ENCODE measurements at regions of chr11 and their contacts with region 1.

Region 1: DNA sequence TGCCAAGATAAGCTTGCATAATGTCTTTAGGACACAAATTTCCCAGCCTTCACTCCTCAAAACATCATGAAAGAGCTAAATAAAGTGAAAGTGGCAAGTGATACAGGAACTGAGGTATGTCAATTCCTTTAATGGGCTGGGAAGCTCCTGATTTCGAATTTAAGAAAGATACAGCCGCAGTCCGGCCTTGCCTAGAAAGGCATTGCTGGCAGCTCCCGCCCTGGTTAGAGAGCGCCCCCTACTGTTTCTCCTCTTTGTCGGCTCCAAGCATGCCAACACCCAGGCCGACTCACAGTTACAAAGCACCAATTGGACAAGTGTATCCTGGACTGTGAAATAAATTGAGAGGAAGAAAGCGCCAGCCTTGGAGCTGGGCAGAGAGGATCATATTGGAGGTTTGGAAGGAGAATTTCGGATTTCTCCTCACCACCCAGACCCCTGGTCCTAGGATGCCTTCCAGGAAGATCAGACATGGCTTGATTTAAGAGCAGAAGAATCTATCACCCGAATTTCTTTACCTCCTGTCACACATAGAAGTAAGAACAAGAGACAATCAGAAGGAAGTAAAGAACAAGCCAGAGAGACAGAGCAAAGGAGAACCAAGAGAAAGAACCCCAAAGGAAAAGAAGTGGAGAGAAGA is 84.0 kb downstream of the FAM76B start:
- DNase-seq: peak; percentile 45
- CTCF ChIP-seq: peak; percentile 86

Region 2: DNA sequence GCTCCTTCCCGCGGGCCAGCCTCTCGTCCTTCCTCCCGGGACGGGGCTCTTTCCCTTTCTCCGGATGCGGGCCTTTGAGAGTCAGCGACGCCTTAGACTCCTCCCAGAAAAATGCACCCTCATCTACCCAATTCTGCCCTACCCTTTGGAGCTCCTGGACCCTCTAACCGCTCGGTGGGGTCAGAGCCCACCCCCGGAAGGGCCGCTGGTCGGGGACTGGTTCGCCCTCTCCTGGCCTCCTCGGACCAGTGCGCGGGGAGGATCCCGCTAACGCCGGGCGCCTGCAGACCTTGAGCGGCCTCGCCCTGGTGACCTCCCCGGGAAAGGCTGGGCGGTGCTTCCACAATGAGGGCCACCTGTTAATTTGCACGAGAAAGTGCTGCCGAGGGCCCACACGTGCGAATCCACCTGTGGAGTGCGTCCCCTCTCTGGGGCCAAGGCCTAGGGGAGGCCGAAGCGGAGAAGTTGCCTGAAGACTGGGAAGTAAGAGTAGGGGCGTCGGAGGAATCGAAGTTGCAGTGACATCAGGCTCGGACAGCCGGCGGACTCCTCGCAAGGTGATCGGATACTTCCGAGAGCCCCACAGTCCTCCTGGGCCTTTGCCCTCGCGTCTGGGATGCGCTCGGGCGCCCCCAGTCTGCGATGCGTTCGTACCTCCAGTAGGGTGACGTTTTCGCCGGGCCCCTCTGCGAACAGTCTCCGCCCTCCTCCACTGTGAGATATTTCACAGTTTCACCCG is 554.5 kb before region 1 on chr11:
- in situ Hi-C with region 1: loop called (anchors 10 kb)
- DNase-seq: peak; percentile 93
- CTCF ChIP-seq: peak; percentile 61

Region 3: DNA sequence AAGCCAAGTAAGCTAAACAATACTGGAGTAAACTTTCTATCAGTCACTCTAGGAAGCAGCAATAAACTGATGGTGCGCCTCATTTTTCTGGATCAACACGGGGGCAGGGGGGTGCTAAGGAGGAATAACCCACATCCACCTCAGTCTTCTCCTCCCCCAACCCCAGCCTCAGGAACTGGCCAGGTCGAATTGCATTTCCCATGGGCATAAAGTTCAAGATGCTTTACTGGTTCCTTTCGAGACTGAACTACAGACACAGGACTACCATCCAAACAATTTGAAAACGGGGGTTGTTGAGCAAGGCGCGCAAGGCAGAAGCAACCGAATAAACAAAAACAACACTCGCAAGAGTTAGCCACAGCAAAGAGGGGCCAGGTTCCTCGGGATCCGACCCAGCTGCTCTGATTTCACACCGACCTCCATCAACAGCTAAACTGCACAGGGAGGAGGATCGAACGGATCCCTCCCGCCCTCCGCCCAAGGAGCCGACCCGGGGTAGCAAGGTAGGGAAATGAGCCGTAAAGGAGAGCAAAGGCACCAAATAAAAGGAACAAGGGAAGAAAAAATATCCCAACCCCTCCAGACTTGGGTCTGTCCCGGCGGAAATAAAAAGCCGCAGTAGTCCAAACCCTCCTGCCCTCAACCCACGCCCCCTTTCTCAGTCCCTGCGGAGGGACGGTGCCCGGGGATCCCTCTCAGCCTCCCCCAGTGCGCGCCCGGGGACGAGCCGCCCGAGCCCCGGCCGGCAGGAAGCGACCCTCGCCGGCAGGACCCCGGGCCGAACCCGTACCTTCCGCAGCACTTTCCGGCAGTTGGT is 475.4 kb before region 1 on chr11:
- in situ Hi-C with region 1: loop called (anchors 10 kb)
- DNase-seq: no peak
- CTCF ChIP-seq: no peak

Region 4: DNA sequence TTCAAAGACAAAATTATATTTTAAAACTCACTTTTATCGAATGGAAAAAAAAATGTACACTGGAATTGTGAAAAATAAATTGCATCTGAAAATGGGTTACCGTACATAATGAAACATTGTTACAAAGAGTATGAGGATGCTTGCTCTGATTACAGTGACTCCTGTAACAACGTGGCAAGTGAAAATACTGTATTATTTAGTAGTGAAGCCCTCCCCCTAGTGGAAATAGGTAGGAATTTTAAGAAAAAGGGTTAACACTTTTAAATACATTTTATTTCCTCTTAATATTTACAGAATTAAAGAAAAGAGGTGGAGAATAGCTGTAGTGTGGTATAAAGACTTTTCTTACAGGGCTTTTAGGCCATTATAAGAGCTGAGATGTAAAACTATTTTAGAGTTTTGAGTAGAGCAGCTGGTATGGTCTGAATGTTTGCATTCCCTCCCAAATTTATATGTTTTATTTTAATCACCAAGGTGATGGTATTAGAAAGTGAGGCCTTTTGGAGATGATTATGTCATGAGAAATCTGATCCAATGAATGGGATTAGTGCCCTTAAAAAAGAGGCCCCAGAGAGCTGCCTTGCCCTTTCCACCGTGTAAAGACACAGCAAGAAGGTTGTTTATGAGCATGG is 58.8 kb after region 1 on chr11:
- in situ Hi-C with region 1: loop called (anchors 10 kb)
- DNase-seq: peak; percentile 50
- CTCF ChIP-seq: peak; percentile 20

Region 5: GRCh38 chr11:96054870-96055705 is 349.5 kb after region 1 on chr11:
- in situ Hi-C with region 1: no loop called
- DNase-seq: no peak
- CTCF ChIP-seq: peak; percentile 22